HCT116 (cell line): ENCODE measurements at regions of chr3 and their contacts with region 1.

Region 1: GRCh38 chr3:111989061-111989678 is 9.6 kb upstream of the TAGLN3 start:
- DNase-seq: peak; percentile 63
- ATAC-seq: peak; percentile 87
- H3K4me3 ChIP-seq: no peak overlapping the region
- H3K27ac ChIP-seq: peak overlapping the region; percentile 20; the same call in 1 of the 2 replicates
- H3K4me1 ChIP-seq: no peaks in the 10 kb centered on the region
- H3K27me3 ChIP-seq: no peaks in the 10 kb centered on the region
- CTCF ChIP-seq: peak; percentile 76 to 94 (median 86)
- POLR2A ChIP-seq: no peak
- RAD21 ChIP-seq: peak; percentile 78

Region 2: GRCh38 chr3:111414531-111414930 is 574.6 kb before region 1 on chr3:
- CTCF ChIA-PET with region 1: no interaction called
- POLR2A ChIA-PET with region 1: no interaction called
- RAD21 ChIA-PET with region 1: no interaction called
- intact Hi-C with region 1: no loop called
- DNase-seq: no peak
- ATAC-seq: no peak
- H3K4me3 ChIP-seq: no peak overlapping the region
- H3K27ac ChIP-seq: no peak overlapping the region
- H3K4me1 ChIP-seq: no peaks in the 10 kb centered on the region
- H3K27me3 ChIP-seq: no peaks in the 10 kb centered on the region
- CTCF ChIP-seq: no peak
- POLR2A ChIP-seq: no peak
- RAD21 ChIP-seq: no peak

Region 3: DNA sequence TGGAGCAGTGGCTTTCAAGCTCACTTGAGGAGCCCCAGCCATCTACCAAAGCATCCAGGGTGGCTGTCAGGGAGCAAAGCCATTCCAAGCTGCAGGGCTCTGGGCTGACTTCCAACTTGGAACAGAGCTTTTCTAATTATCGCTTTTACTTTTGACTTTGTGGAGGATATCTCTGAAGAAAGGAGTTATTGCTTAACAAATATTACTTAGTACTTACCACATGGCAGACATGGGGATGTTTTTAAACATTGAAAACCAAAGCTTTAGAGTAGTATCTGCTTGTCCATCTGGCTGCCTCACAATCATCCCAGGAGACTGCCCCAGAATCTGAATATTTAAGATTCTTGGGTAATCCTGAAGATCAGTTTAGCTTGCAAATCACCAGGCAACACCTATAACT is 18.5 kb after region 1 on chr3:
- CTCF ChIA-PET with region 1: interaction called, 109 read pairs
- POLR2A ChIA-PET with region 1: interaction called, 4 read pairs
- RAD21 ChIA-PET with region 1: interaction called in 1 of 2 experiments, 4 read pairs
- intact Hi-C with region 1: no loop called
- DNase-seq: no peak
- ATAC-seq: no peak
- H3K4me3 ChIP-seq: no peak overlapping the region
- H3K27ac ChIP-seq: no peak overlapping the region
- H3K4me1 ChIP-seq: peaks cover 0 to 32% of the 10 kb centered on the region in 2 experiments; a peak in 3 of 4 replicates
- H3K27me3 ChIP-seq: no peaks in the 10 kb centered on the region
- CTCF ChIP-seq: no peak
- POLR2A ChIP-seq: no peak
- RAD21 ChIP-seq: no peak

Region 4: DNA sequence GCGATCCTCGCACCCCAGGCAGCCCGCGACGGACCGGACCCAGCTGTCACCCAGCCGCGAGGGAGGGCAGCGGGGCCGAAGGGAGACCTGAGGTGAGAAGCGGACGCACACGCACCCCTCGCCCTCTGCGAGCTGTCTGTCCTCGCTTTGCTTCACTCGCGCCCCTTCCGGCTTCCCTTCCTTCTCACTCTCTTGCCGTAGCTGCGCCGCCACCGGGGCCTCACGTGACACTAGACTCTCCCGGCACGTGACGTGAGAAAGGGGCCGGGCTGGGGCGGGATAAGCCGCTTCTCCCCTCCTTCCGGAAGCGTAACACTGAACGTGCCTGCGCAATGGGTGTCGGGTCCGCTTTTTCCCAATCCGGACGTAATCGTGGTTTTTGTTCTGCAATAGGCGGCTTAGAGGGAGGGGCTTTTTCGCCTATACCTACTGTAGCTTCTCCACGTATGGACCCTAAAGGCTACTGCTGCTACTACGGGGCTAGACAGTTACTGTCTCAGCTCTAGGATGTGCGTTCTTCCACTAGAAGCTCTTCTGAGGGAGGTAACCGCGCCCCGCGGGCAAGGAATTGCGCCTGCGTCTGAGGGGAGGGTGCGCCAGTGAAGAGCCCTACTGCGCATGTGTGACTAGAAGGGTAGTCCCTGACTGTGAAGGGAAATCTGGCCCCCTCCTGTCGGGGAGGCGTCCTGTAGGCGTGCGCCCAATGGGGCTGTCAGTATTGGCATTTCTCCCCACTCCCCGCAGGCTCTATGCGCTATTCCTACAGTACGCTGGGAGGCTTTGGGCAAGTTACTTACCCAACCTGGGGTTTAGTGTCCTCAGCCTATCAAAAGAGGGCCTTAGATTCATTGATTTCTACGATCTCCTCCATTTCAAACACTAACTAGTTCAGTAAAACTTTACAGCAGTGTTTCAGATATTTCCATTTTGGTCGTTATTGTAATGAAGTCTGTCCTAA is 572.8 kb after region 1 on chr3 and contains the starts of genes ATG3 and SLC35A5:
- CTCF ChIA-PET with region 1: no interaction called
- POLR2A ChIA-PET with region 1: no interaction called
- RAD21 ChIA-PET with region 1: no interaction called
- intact Hi-C with region 1: no loop called
- DNase-seq: peak; percentile 96
- ATAC-seq: peak; percentile 88
- H3K4me3 ChIP-seq: peak within 1 kb of the TSS; percentile 80 to 94
- H3K27ac ChIP-seq: peak within 1 kb of the TSS; percentile 75
- H3K4me1 ChIP-seq: peaks cover 9 to 11% of the 10 kb centered on the region in 2 experiments; a peak in 3 of 4 replicates
- H3K27me3 ChIP-seq: no peaks in the 10 kb centered on the region
- CTCF ChIP-seq: 0 out of 6 replicates have a peak, but pooled peaks of 1 of the 3 experiments have one; percentile 11
- POLR2A ChIP-seq: peak; percentile 76
- RAD21 ChIP-seq: no peak
- total RNA-seq, gene ATG3: 56.4 TPM
- total RNA-seq, gene SLC35A5: 21.4 TPM